ENCODE measurements at regions of chr18 and their contacts with region 1.

Region 1: DNA sequence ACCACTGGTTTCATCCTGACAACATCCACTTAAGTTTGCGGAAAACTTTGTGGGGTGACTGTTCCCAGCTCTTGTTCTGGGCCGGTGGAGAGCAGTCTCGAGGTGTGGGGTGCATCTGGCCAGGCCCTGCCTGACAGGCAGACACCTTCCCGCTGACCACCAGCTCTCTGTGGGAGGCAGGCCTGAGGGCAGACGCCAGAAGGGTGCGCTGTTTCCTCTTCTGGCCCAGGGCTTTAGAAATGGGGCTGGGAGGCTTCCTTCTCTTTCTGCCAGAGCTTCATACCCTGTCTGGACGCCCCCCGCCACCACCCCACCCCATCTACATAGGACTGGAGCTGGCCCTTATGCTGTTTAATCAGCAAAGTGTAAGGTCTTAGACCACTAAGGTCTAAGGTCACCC is 263.8 kb downstream of the LOXHD1 start:
- DNase-seq: peak; percentile 82
- ATAC-seq: peak; percentile 93
- H3K4me3 Mint-ChIP-seq: no peak overlapping the region
- H3K27ac Mint-ChIP-seq: no peak overlapping the region
- H3K4me1 Mint-ChIP-seq: no peaks in the 10 kb centered on the region
- H3K27me3 Mint-ChIP-seq: no peaks in the 10 kb centered on the region
- CTCF ChIP-seq: peak; percentile 29; the same call in 1 of the 2 replicates

Region 2: GRCh38 chr18:46338766-46339165 is 54.5 kb before region 1 on chr18:
- CTCF ChIA-PET with region 1: interaction called, 12 read pairs
- POLR2A ChIA-PET with region 1: no interaction called
- DNase-seq: no peak
- ATAC-seq: no peak
- H3K4me3 Mint-ChIP-seq: no peak overlapping the region
- H3K27ac Mint-ChIP-seq: peak overlapping the region; percentile 65
- H3K4me1 Mint-ChIP-seq: peaks cover 64% of the 10 kb centered on the region
- H3K27me3 Mint-ChIP-seq: peaks cover 4% of the 10 kb centered on the region; the same call in 1 of the 2 replicates
- CTCF ChIP-seq: no peak

Region 3: DNA sequence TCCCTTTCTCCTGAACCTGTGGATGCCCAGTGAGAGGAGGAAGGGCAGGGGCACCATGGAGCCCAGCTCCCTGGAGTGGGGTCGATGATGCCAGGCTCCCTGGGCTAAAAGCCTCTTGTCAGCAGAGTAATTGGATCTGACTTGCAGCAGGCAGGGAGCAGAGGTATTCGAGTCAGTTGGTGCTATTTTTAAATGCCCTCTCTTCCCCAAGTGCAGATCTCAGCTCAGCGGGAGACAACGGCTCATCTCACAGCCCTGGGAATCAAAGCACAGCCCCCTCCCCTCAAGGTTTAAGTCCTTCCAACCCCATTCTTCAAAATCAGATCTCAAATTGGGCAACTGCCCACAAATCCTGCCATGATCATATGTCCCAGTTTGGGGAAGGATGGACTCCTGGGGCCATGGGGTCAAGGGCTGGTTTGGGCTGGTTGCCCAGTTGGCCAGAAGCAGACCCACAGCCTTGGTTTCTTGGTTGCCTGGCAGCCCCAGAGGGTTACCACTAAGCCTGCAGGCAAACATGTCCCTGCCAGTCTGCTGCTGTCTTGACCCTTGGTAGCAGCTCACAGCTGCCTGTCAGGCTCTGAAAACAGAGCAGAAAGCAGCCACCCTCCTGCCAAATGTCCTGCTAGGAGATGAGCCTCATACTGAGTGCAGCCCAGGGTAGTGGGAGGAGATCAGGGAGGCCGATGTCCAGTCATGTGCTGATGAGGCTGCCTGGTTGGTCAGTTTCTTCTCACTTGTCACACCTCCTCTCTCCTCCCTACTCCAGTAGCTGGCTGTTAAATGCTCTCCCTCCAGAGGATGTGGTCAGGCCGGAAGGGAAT is 18.8 kb after region 1 on chr18:
- CTCF ChIA-PET with region 1: interaction called, 10 read pairs
- POLR2A ChIA-PET with region 1: no interaction called
- DNase-seq: no peak
- ATAC-seq: no peak
- H3K4me3 Mint-ChIP-seq: no peak overlapping the region
- H3K27ac Mint-ChIP-seq: peak overlapping the region; percentile 10; the same call in 1 of the 2 replicates
- H3K4me1 Mint-ChIP-seq: peaks cover 58% of the 10 kb centered on the region
- H3K27me3 Mint-ChIP-seq: no peaks in the 10 kb centered on the region
- CTCF ChIP-seq: no peak

Region 4: DNA sequence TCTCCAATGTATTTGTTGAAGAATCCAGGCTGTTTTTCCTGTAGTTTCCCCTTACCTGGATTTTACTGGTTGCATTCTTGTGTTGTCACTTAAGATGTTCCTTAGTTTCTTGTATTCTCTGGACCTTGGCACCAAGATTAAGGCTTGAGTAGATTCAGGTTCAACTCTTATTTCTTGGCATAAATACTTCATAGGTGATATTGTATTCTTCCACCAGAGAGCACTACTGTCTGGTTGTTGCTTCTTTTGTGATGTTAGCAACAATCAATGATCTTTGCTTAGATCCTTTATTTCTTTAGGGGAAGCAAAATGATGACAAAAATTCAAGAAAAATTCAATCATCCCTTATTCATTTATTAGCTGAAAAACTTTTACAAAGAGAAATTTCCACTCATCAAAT is 52.7 kb after region 1 on chr18:
- CTCF ChIA-PET with region 1: interaction called, 16 read pairs
- POLR2A ChIA-PET with region 1: no interaction called
- DNase-seq: no peak
- ATAC-seq: no peak
- H3K4me3 Mint-ChIP-seq: no peak overlapping the region
- H3K27ac Mint-ChIP-seq: no peak overlapping the region
- H3K4me1 Mint-ChIP-seq: peaks cover 33% of the 10 kb centered on the region
- H3K27me3 Mint-ChIP-seq: peaks cover 12% of the 10 kb centered on the region
- CTCF ChIP-seq: no peak

Region 5: DNA sequence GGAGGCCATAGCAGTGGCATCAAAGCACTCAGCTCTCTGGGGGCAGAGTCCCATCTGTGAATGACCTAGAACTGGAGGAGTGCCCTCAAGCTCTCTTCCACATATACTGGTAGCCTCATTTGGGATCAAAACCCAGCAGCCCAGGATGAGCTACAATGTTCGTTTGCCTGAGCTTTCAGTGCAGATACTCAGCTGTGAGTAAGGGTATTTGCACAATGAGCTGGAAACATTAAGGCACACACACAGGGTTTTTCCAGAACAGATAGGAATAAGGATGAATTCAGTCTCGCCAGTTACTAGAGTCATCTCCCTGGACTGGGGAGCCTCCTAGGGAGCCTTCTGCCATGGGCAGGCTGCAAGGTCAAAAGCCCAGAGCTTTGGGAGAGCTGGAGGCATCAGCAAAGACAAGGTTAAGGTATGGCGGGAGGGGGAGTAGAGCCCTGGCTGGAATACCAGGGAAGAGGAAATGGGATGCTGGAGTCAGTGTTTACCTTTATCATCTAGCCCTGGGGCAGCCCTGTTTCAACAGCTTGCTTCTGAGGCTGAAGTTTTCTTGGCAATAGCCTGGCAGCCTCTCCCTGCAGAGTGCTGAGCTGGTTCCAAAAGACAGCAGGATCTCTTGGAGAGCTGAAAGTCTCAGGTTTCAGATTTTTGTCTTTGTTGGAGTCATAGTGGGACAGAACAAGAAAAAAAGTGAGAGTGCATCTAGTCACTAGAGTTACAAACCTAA is 76.1 kb after region 1 on chr18:
- CTCF ChIA-PET with region 1: interaction called, 18 read pairs
- POLR2A ChIA-PET with region 1: no interaction called
- DNase-seq: no peak
- ATAC-seq: no peak; the same call in 1 of the 2 replicates
- H3K4me3 Mint-ChIP-seq: no peak overlapping the region
- H3K27ac Mint-ChIP-seq: no peak overlapping the region; the same call in 1 of the 2 replicates
- H3K4me1 Mint-ChIP-seq: peaks cover 41% of the 10 kb centered on the region
- H3K27me3 Mint-ChIP-seq: peaks cover 4% of the 10 kb centered on the region; the same call in 1 of the 2 replicates
- CTCF ChIP-seq: no peak

Region 6: DNA sequence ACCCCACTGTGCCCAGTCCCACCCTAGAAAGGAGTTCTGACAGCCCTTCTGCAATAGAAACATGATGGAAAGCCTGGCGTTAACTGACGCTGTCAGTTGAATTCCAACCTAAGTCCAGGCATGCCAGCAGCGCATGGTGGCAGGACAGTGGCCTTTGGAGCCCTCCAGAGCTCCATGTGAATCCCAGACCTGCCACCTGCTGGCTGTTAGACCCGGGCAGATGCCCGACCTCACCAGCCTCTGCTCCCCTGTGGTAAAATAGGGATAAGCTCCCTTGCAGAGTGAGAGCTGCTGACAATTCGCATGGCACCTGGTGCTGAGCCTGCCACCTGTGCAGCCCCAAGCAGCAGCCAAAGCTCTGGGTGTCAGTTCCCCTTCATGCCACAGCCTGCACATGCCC is 125.2 kb after region 1 on chr18:
- CTCF ChIA-PET with region 1: interaction called, 31 read pairs
- POLR2A ChIA-PET with region 1: no interaction called
- DNase-seq: peak; percentile 38
- ATAC-seq: peak; percentile 68
- H3K4me3 Mint-ChIP-seq: no peak overlapping the region
- H3K27ac Mint-ChIP-seq: no peak overlapping the region
- H3K4me1 Mint-ChIP-seq: no peaks in the 10 kb centered on the region
- H3K27me3 Mint-ChIP-seq: peaks cover 2% of the 10 kb centered on the region
- CTCF ChIP-seq: no peak

Region 7: DNA sequence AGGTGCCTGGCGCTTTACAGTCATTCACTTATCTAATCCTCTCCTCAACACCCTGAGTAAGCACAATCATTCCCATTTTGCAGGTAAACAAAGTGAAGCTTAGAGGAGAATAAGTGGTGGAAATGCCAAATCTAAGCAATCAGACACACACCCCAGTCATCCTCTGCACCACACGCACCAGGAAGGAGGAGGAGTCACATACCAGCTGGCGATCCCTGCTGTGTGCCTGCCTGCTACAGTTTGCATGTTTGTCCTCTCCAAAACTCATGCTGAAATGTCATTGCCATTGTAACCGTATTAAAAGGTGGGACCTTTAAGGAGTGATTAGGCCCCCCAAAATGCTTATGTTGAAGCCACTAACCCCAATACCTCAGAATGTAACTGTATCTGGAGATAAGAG is 170.1 kb after region 1 on chr18:
- CTCF ChIA-PET with region 1: no interaction called
- POLR2A ChIA-PET with region 1: no interaction called
- DNase-seq: peak; percentile 32
- ATAC-seq: peak; percentile 73
- H3K4me3 Mint-ChIP-seq: no peak overlapping the region
- H3K27ac Mint-ChIP-seq: no peak overlapping the region; the same call in 1 of the 2 replicates
- H3K4me1 Mint-ChIP-seq: peaks cover 17% of the 10 kb centered on the region
- H3K27me3 Mint-ChIP-seq: peaks cover 2% of the 10 kb centered on the region
- CTCF ChIP-seq: no peak

Measured in WTC11 (cell line).